Calu3 (cell line): ENCODE measurements at regions of chr2 and their contacts with region 1.

Region 1: GRCh38 chr2:121530212-121530705 is 421 bp upstream of the RNU4ATAC start:
- DNase-seq: peak; percentile 75
- H3K4me3 Mint-ChIP-seq: peak overlapping the region; percentile 81
- H3K27ac Mint-ChIP-seq: peak overlapping the region; percentile 89
- H3K4me1 Mint-ChIP-seq: peaks cover 34% of the 10 kb centered on the region
- H3K27me3 Mint-ChIP-seq: no peaks in the 10 kb centered on the region
- CTCF ChIP-seq: no peak

Region 2: GRCh38 chr2:121095257-121096080 is 434.8 kb before region 1 on chr2:
- CTCF ChIA-PET with region 1: no interaction called
- intact Hi-C with region 1: no loop called
- DNase-seq: peak; percentile 75
- H3K4me3 Mint-ChIP-seq: no peak overlapping the region
- H3K27ac Mint-ChIP-seq: no peak overlapping the region
- H3K4me1 Mint-ChIP-seq: peaks cover 9% of the 10 kb centered on the region
- H3K27me3 Mint-ChIP-seq: no peaks in the 10 kb centered on the region
- CTCF ChIP-seq: peak; percentile 84

Region 3: GRCh38 chr2:121476684-121477083 is 53.6 kb before region 1 on chr2:
- CTCF ChIA-PET with region 1: interaction called, 3 read pairs
- intact Hi-C with region 1: loop called (anchors 1 kb)
- DNase-seq: no peak
- H3K4me3 Mint-ChIP-seq: no peak overlapping the region
- H3K27ac Mint-ChIP-seq: no peak overlapping the region
- H3K4me1 Mint-ChIP-seq: peaks cover 40% of the 10 kb centered on the region
- H3K27me3 Mint-ChIP-seq: no peaks in the 10 kb centered on the region
- CTCF ChIP-seq: no peak

Region 4: DNA sequence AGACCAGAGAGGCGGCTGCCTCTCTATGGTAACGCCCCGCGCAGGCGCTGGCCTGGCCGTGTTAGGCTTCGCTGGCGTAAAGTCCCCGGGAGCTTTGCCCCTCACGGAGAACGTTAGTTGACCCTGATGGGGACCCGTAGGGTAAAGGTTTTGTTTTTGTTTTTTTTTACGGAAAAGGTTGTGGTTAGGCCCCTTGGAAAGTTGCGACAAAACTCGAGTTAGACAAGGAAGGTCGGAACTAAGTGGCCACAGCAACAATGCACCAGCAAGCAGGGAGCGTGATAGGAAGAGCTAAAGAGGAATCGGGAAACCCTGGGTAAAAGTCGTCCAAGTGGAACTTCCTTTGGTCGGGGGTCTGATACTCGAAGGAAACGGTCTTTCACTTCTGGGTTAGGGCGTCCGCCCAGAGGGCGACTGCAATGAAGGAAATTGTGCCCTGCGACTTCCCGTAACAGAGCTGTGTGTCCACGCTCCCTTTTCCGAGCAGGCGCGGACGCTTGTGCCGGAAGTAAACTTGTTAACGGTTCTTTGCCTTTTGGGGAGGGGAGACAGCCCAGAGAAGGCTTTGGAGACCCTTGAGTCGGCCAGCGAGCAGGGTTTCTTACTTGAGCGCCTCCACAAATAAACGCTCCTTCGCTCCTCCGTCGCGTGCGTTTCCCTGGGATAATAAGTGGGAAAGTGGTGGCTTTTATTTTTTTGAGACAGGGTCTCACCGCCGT is 119.5 kb after region 1 on chr2:
- CTCF ChIA-PET with region 1: interaction called, 5 read pairs
- intact Hi-C with region 1: loop called (anchors 2 kb)
- DNase-seq: peak; percentile 93
- H3K4me3 Mint-ChIP-seq: peak overlapping the region; percentile 96
- H3K27ac Mint-ChIP-seq: peak overlapping the region; percentile 98
- H3K4me1 Mint-ChIP-seq: peaks cover 35% of the 10 kb centered on the region
- H3K27me3 Mint-ChIP-seq: no peaks in the 10 kb centered on the region
- CTCF ChIP-seq: no peak

Region 5: GRCh38 chr2:121722479-121722878 is 192.2 kb after region 1 on chr2:
- CTCF ChIA-PET with region 1: interaction called, 6 read pairs
- intact Hi-C with region 1: loop called (anchors 1 kb)
- DNase-seq: no peak
- H3K4me3 Mint-ChIP-seq: no peak overlapping the region
- H3K27ac Mint-ChIP-seq: no peak overlapping the region
- H3K4me1 Mint-ChIP-seq: peaks cover 7% of the 10 kb centered on the region
- H3K27me3 Mint-ChIP-seq: no peaks in the 10 kb centered on the region
- CTCF ChIP-seq: no peak

Region 6: DNA sequence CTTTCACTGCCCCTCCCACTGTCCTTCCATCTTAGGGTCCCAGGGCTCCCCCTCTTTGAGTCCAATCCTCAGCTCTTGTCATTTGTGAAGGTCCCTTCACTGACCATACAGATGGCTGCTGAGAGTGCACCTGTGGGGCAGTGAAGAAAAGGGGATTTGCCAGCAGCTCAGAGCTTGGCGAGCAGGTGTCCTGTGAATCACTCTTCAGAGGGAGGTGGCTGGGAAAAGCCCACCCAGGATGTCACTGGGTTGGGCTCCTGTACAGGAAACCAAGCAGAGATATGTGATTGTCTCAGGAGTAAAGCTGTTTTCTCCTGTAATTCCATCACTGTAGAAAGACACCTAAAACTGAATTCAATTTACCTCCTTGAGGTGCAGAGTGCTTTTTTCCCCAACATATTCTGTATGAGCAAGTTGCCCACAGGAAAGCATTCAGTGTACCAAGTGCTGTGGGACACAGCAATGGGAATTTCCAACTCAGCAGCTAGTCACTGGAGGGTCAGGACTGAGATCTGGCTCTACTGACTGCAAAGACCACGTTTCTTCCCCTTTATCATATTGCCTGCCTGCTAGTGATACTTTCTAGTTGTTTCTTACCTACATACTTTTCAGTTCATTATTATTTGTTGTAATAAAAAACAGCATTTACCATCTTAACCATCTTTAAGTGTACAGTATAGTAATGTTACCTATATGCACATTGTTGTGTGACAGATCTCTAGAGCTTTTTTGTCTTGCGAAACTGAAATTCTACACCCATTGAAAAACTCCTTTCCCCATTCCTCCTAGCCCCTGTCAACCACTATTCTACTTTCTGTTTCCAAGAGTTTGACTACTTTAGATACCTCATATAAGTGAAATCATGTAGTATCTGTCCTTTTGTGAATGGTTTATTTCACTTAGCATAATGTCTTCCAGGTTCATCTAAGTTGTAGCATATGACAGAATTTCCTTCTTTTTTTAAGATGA is 464.3 kb after region 1 on chr2:
- CTCF ChIA-PET with region 1: no interaction called
- intact Hi-C with region 1: no loop called
- DNase-seq: no peak
- H3K4me3 Mint-ChIP-seq: no peak overlapping the region
- H3K27ac Mint-ChIP-seq: no peak overlapping the region
- H3K4me1 Mint-ChIP-seq: no peaks in the 10 kb centered on the region
- H3K27me3 Mint-ChIP-seq: peaks cover 91% of the 10 kb centered on the region
- CTCF ChIP-seq: no peak